ENCODE measurements at regions of chr14 and their contacts with region 1.

Region 1: DNA sequence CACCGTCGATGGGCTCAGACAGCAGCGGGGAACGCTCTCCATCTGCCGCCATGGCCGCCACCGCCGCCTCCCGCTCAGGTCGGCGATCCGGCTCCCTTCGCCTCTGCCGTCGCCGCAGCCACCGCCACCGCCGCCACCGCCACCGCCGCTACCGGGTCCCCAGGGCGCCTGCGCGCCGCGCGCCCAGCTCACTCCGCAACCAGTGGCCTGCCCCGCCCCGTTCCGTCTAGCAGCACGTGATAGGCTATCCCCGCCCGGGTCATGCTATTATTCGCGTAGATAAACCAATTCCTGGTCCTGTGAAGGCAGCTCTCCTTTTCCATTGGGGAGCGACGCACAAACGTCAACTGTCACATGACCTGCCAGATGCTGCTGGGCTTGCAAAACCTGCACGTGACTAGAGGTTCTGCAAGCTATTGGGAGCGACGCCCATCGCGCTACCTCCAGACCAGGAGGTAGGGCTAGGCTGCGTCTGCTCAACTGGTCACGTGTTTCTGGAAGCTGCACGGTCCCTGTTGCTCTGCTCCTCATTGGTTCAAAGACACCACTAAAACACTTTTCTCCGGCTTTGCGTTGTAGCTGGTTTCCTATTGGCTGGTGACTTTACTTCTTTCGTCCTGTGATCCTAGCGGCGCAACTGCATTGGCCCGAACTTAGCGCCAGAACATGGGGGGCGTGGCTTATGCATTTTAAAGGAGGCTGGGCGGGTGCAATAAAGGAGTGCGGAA is at the start of gene PIP4P1:
- DNase-seq: peak; percentile 97 to 100 (median 99)

Region 2: GRCh38 chr14:20343092-20343861 is 118.2 kb before region 1 on chr14 and contains the start of gene PARP2:
- intact Hi-C with region 1: loop called (anchors 2 kb)
- DNase-seq: peak; percentile 94 to 100 (median 98)

Region 3: GRCh38 chr14:20587489-20588154 is 126.2 kb after region 1 on chr14 and contains the start of gene RNASE11:
- intact Hi-C with region 1: no loop called
- DNase-seq: no peak